Activated CD8-positive, alpha-beta memory T cell treated with anti-CD3 and anti-CD28 coated beads, Interleukin-2, amount 10 ng/mL, durations not matched to agents 7 days and 5 days (primary cell): ENCODE measurements at regions of chr17 and their contacts with region 1.

Region 1: GRCh38 chr17:42405963-42406495 is 17.0 kb downstream of the CAVIN1 start:
- DNase-seq: peak; percentile 86
- ATAC-seq: peak; percentile 83
- H3K4me3 Mint-ChIP-seq: no peak overlapping the region
- H3K27ac Mint-ChIP-seq: peak overlapping the region; percentile 15
- H3K4me1 Mint-ChIP-seq: peaks cover 10% of the 10 kb centered on the region
- H3K27me3 Mint-ChIP-seq: peaks cover 7% of the 10 kb centered on the region

Region 2: GRCh38 chr17:42221937-42222745 is 183.9 kb before region 1 on chr17:
- CTCF ChIA-PET with region 1: interaction called, 16 read pairs
- DNase-seq: peak; percentile 68
- ATAC-seq: peak; percentile 83
- H3K4me3 Mint-ChIP-seq: no peak overlapping the region
- H3K27ac Mint-ChIP-seq: peak overlapping the region; percentile 52
- H3K4me1 Mint-ChIP-seq: peaks cover 4% of the 10 kb centered on the region
- H3K27me3 Mint-ChIP-seq: no peaks in the 10 kb centered on the region

Region 3: GRCh38 chr17:42287926-42288802 is 117.9 kb before region 1 on chr17 and contains the start of gene STAT5A:
- CTCF ChIA-PET with region 1: interaction called, 11 read pairs
- DNase-seq: peak; percentile 91
- ATAC-seq: peak; percentile 84
- H3K4me3 Mint-ChIP-seq: peak within 1 kb of the TSS; percentile 96
- H3K27ac Mint-ChIP-seq: peak within 1 kb of the TSS; percentile 97
- H3K4me1 Mint-ChIP-seq: peaks cover 57% of the 10 kb centered on the region
- H3K27me3 Mint-ChIP-seq: no peaks in the 10 kb centered on the region
- total RNA-seq, gene STAT5A: 118 to 127 TPM

Region 4: GRCh38 chr17:42388381-42389134 is 17.5 kb before region 1 on chr17 and contains the start of gene STAT3:
- CTCF ChIA-PET with region 1: interaction called, 133 read pairs
- DNase-seq: peak; percentile 100
- ATAC-seq: peak; percentile 91
- H3K4me3 Mint-ChIP-seq: peak within 1 kb of the TSS; percentile 98
- H3K27ac Mint-ChIP-seq: peak within 1 kb of the TSS; percentile 99
- H3K4me1 Mint-ChIP-seq: peaks cover 54% of the 10 kb centered on the region
- H3K27me3 Mint-ChIP-seq: no peaks in the 10 kb centered on the region
- total RNA-seq, gene STAT3: 90.5 to 97.6 TPM

Region 5: DNA sequence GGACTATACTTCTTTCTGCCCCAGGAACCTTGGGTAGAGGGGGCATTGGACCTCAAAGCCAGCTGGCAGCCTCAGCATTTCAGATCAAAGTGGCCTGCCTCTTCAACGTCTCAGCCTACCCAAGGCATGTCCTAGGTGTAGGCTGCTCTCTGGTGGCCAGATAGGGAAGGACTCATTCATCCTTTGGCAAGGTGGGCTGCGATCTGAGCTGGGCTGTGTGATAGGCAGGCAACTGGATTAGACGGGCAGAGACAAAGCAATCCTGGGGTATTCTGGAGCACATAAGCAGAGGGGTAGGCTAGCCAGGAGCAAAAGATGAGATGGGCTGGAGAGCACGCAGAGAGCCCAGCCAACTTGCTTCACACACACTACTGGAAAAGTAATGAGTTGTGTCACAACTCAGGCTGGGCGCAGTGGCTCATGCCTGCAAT is 121.3 kb after region 1 on chr17:
- CTCF ChIA-PET with region 1: interaction called, 25 read pairs
- DNase-seq: peak; percentile 85
- ATAC-seq: peak; percentile 83
- H3K4me3 Mint-ChIP-seq: no peak overlapping the region
- H3K27ac Mint-ChIP-seq: no peak overlapping the region
- H3K4me1 Mint-ChIP-seq: peaks cover 56% of the 10 kb centered on the region
- H3K27me3 Mint-ChIP-seq: peaks cover 29% of the 10 kb centered on the region